Endothelial cell of umbilical vein (primary cell): ENCODE measurements at regions of chr6 and their contacts with region 1.

Region 1: GRCh38 chr6:157148391-157149323 is 174.7 kb downstream of the TMEM242 start:
- DNase-seq: peak; percentile 97
- H3K4me3 ChIP-seq: peak overlapping the region in 1 of 3 experiments; percentile 1
- H3K27ac ChIP-seq: peak overlapping the region; percentile 97
- H3K4me1 ChIP-seq: peaks cover 60% of the 10 kb centered on the region
- H3K27me3 ChIP-seq: no peaks in the 10 kb centered on the region
- CTCF ChIP-seq: no peak
- POLR2A ChIP-seq: no peak

Region 2: DNA sequence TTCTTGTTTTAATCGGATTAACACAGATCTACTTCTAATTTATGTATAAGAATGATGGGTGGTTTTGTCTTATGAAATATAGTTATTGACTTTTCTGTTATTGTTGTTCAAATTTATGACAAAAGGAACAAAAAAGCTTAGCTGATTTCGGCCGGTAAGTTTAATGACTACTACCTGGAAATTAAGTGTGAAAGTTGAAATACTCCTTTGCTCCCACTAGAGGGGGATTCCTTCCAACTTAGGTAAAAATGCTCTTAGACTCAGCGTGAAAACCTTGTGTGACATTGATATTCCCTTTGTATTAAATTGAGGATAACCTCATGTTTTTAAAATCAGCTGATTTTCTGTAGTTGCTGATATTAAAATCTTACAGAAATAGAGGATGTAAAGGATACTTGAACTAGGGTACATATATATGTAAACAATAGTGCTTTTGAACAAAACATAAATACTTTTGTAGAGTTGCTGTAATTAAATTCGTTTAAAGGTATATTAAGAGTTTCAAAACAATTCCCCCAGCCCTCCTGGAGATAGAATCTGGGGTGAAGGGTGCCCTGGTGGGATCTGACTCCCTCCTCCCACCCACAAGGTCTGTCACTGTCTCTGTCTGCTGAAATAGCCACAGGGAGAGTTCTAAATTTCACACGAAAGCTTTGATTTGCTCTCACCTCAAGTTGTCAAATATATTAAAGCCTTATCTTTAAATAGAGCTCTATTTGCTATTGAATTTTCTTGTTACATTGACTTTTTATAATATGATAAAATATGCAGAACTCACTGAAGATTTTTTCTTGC is 114.0 kb before region 1 on chr6:
- CTCF ChIA-PET with region 1: interaction called, 12 read pairs
- POLR2A ChIA-PET with region 1: no interaction called
- dilution Hi-C with region 1: no loop called
- intact Hi-C with region 1: no loop called
- DNase-seq: peak; percentile 65
- H3K4me3 ChIP-seq: no peak overlapping the region
- H3K27ac ChIP-seq: peak overlapping the region; percentile 16
- H3K4me1 ChIP-seq: peaks cover 8% of the 10 kb centered on the region
- H3K27me3 ChIP-seq: no peaks in the 10 kb centered on the region
- CTCF ChIP-seq: peak; percentile 50 to 54
- POLR2A ChIP-seq: no peak

Region 3: DNA sequence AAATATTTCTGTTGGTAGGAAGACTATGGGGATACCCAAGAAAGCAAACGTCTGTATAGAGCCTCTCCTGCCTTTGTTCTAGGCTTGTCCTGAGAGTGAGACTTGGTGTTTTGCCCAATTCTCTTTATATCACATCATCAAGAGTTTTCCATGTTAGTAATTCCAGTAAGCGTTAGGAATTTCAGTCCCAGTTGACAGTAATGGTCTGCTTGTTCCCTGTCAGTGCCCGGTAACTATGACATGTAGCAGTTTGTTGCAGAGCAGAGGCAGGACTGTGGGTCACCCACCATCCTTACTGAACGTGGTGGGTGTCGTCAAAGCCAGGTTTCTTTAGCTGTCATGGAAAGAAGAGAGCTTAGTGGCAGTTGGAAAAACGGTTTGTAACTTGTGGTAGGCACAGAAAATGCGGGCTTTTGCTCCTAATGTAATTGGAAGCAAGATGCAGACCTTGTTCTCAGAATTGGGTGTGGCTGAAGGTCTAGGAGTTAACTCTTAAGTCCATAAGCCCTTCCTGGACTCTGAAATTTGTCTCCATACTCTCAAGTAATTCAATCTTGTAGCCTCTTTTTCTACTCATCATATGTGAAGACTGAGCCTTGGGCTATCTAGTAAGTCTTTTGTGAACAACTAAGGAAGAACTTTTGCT is 14.1 kb before region 1 on chr6:
- CTCF ChIA-PET with region 1: interaction called, 14 read pairs
- POLR2A ChIA-PET with region 1: interaction called, 3 read pairs
- dilution Hi-C with region 1: no loop called
- intact Hi-C with region 1: loop called (anchors 1 kb)
- DNase-seq: no peak
- H3K4me3 ChIP-seq: no peak overlapping the region
- H3K27ac ChIP-seq: no peak overlapping the region
- H3K4me1 ChIP-seq: peaks cover 8% of the 10 kb centered on the region
- H3K27me3 ChIP-seq: no peaks in the 10 kb centered on the region
- CTCF ChIP-seq: no peak
- POLR2A ChIP-seq: no peak